ENCODE measurements at regions of chr6 and their contacts with region 1.

Region 1: GRCh38 chr6:100163035-100163434 is 169.0 kb upstream of the MCHR2 start:
- DNase-seq: no peak
- H3K4me3 ChIP-seq: no peak overlapping the region
- H3K27me3 ChIP-seq: no peaks in the 10 kb centered on the region
- CTCF ChIP-seq: no peak

Region 2: GRCh38 chr6:99838607-99839006 is 324.4 kb before region 1 on chr6:
- CTCF ChIA-PET with region 1: no interaction called
- POLR2A ChIA-PET with region 1: no interaction called
- DNase-seq: no peak
- H3K4me3 ChIP-seq: no peak overlapping the region
- H3K27me3 ChIP-seq: no peaks in the 10 kb centered on the region
- CTCF ChIP-seq: no peak

Region 3: DNA sequence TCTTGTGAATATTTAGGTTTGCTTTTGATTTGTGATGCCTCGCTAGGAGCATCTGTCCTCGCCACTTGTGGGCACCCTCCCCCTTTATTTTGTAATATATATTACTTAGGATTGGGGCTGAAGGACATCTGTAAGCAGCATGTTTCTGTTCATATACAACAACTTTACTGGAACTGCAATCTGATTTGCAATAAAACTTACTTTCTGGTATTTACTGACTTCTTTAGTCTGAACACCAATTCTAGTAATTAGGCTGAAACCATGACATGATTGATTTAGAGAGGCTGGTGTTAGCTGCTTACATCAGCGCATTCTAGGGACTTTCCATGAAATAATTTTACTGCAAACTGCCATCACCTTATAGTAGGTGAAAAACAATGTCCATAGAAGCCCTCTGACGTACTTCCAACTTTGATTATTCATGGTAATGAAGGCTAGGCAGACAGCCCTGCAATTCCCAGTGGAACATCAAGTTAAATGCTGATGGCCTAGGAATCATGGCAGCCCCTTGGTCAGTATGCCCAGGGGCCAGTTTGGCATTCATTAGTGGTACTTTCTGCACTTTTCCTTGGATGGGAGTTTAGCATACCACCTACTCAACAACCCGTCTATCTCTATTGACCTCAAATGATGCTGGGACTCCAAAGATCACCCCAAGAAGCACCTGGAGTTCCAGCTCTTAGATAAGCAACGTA is 36.1 kb before region 1 on chr6:
- CTCF ChIA-PET with region 1: no interaction called
- POLR2A ChIA-PET with region 1: interaction called, 11 read pairs
- DNase-seq: no peak
- H3K4me3 ChIP-seq: no peak overlapping the region
- H3K27me3 ChIP-seq: no peaks in the 10 kb centered on the region
- CTCF ChIP-seq: no peak